ENCODE measurements at regions of chr1 and their contacts with region 1.

Region 1: DNA sequence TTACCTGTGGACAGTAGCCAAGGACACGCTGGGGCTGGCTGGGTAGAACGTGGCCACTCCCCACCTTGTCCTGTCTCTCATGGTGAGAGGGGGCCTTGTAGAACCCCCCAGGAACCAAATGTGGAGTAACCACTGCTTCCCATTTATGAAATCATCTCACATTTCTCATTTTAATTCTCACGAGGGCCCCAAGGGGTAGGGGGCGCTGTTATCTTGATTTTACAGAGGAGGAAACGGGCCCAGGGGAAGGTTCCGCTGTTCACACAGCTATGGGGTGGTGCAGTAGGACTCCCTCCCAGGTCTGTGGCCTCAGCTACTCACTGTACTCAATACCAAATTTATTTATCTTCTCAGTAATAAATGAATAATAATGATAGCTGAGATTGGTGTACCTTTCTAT is 5.5 kb downstream of the SMPDL3B start:
- DNase-seq: no peak
- H3K4me3 ChIP-seq: no peak overlapping the region
- CTCF ChIP-seq: no peak

Region 2: GRCh38 chr1:27952147-27952546 is 11.8 kb after region 1 on chr1:
- CTCF ChIA-PET with region 1: interaction called, 11 read pairs
- POLR2A ChIA-PET with region 1: no interaction called
- DNase-seq: no peak
- H3K4me3 ChIP-seq: no peak overlapping the region
- CTCF ChIP-seq: no peak